Activated CD4-positive, alpha-beta T cell treated with anti-CD3 and anti-CD28 coated beads for 36 hours (primary cell): ENCODE measurements at regions of chr6 and their contacts with region 1.

Region 1: DNA sequence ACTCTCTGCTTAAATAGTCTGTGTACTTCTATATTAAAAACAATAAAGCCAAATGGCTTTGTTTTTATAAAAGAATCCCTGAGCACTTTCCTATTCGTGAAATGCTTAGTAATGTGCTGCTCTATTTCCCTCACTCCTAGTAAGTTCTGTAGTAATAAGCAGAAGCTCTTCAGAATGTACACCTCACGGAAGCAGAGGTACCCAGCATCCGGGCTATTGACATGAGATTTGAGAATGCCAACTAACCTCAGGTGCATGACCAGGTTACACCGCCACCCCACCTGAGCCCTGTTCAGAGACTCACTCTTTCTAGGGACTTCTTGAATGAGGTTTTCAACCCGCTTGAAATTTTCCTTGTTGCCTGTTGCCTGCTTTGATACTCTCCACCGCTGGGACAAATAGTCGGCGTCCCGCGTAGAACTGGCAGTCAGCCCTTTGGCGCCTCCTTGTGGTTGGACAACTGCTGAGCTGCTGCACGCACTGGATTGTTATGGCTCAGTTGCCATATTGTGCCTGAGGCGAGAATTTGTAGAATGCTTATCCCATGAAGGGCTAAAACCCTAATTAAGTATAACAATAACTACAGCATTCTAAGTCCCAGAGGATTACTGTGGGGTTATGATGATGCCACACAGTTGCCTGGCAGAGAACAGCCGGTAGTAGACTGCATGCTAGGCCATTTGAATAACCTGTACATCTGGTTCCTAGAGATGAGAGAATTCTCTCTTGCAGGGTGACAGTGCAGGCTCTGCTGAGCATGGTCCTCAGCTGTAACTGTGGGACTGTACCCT is 95.4 kb downstream of the KHDC1L start:
- DNase-seq: peak; percentile 91
- ATAC-seq: peak; percentile 98
- H3K4me3 Mint-ChIP-seq: no peak overlapping the region
- H3K27ac Mint-ChIP-seq: no peak overlapping the region
- H3K4me1 Mint-ChIP-seq: peaks cover 4% of the 10 kb centered on the region
- H3K27me3 Mint-ChIP-seq: peaks cover 10% of the 10 kb centered on the region

Region 2: GRCh38 chr6:72522719-72523141 is 607.1 kb before region 1 on chr6:
- CTCF ChIA-PET with region 1: interaction called, 3 read pairs
- POLR2A ChIA-PET with region 1: no interaction called
- intact Hi-C with region 1: loop called in 1 of 2 experiments (anchors 5 kb)
- DNase-seq: peak; percentile 32
- ATAC-seq: no peak
- H3K4me3 Mint-ChIP-seq: no peak overlapping the region
- H3K27ac Mint-ChIP-seq: no peak overlapping the region
- H3K4me1 Mint-ChIP-seq: no peaks in the 10 kb centered on the region
- H3K27me3 Mint-ChIP-seq: no peaks in the 10 kb centered on the region

Region 3: GRCh38 chr6:73041051-73041450 is 88.8 kb before region 1 on chr6:
- CTCF ChIA-PET with region 1: no interaction called
- POLR2A ChIA-PET with region 1: no interaction called
- intact Hi-C with region 1: no loop called
- DNase-seq: no peak
- ATAC-seq: no peak
- H3K4me3 Mint-ChIP-seq: no peak overlapping the region
- H3K27ac Mint-ChIP-seq: no peak overlapping the region
- H3K4me1 Mint-ChIP-seq: no peaks in the 10 kb centered on the region
- H3K27me3 Mint-ChIP-seq: no peaks in the 10 kb centered on the region

Region 4: GRCh38 chr6:73180763-73181619 is 51.1 kb after region 1 on chr6:
- CTCF ChIA-PET with region 1: no interaction called
- POLR2A ChIA-PET with region 1: no interaction called
- intact Hi-C with region 1: loop called (anchors 1 to 2 kb)
- DNase-seq: no peak
- ATAC-seq: peak; percentile 90
- H3K4me3 Mint-ChIP-seq: no peak overlapping the region
- H3K27ac Mint-ChIP-seq: no peak overlapping the region
- H3K4me1 Mint-ChIP-seq: no peaks in the 10 kb centered on the region
- H3K27me3 Mint-ChIP-seq: no peaks in the 10 kb centered on the region